CD8-positive, alpha-beta T cell (primary cell): ENCODE measurements at regions of chr15 and their contacts with region 1.

Region 1: DNA sequence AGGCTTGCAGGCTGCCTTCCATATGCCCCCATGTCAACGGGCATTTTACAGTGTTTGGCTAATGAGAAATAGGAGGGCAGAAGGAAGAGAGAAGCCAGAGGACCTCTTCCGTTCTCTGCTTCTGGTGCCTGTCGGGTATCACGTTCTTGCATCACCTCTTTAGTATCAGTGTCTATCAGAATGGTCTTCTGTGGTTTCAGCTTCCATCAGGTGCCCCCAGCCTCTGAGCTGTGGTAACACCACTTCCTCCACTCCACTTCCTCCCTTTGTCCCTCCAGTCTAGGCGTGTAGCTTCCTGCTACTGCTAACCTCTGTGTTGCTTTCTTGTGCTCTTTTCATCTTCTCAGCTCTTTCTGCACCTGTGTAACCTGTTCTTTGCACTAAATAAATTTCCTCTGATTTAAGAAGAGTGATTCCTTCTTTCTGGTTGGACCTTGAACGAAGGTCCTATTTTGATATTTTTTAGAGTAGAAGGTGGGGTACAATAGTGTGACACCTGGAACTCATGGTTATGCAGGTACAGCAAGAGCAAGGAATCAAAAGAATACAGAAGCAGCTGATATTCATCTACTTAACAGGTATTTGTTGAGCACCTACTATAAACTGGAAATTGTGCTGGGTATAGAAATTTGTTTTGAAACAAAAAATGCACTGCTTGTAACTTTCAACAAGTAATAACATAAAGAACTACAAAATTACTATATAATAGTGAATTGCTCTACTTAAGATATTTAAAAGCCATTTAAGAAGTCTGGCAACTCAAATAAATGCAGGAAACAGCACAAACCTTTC is 27.4 kb upstream of the FOXB1 start:
- DNase-seq: peak in 8 of 9 experiments; percentile 41 to 86 (median 64)
- ATAC-seq: peak; percentile 93
- H3K4me3 ChIP-seq: no peak overlapping the region
- H3K4me3 Mint-ChIP-seq: peak overlapping the region; percentile 40
- H3K27ac ChIP-seq: no peak overlapping the region
- H3K27ac Mint-ChIP-seq: peak overlapping the region; percentile 67
- H3K4me1 ChIP-seq: peaks cover 25% of the 10 kb centered on the region
- H3K4me1 Mint-ChIP-seq: peaks cover 30% of the 10 kb centered on the region
- H3K27me3 ChIP-seq: no peaks in the 10 kb centered on the region
- H3K27me3 Mint-ChIP-seq: peaks cover 2% of the 10 kb centered on the region
- CTCF ChIP-seq: no peak

Region 2: GRCh38 chr15:59933607-59934006 is 43.1 kb before region 1 on chr15:
- CTCF ChIA-PET with region 1: no interaction called
- POLR2A ChIA-PET with region 1: no interaction called
- intact Hi-C with region 1: loop called in 1 of 2 experiments (anchors 5 kb)
- DNase-seq: no peak
- ATAC-seq: no peak
- H3K4me3 ChIP-seq: no peak overlapping the region
- H3K4me3 Mint-ChIP-seq: no peak overlapping the region
- H3K27ac ChIP-seq: no peak overlapping the region
- H3K27ac Mint-ChIP-seq: no peak overlapping the region
- H3K4me1 ChIP-seq: no peaks in the 10 kb centered on the region
- H3K4me1 Mint-ChIP-seq: no peaks in the 10 kb centered on the region
- H3K27me3 ChIP-seq: no peaks in the 10 kb centered on the region
- H3K27me3 Mint-ChIP-seq: peaks cover 18% of the 10 kb centered on the region
- CTCF ChIP-seq: no peak

Region 3: GRCh38 chr15:61946778-61947177 is 1970.1 kb after region 1 on chr15:
- CTCF ChIA-PET with region 1: no interaction called
- POLR2A ChIA-PET with region 1: no interaction called
- intact Hi-C with region 1: no loop called
- DNase-seq: no peak
- ATAC-seq: no peak
- H3K4me3 ChIP-seq: no peak overlapping the region
- H3K4me3 Mint-ChIP-seq: no peak overlapping the region
- H3K27ac ChIP-seq: no peak overlapping the region
- H3K27ac Mint-ChIP-seq: no peak overlapping the region
- H3K4me1 ChIP-seq: no peaks in the 10 kb centered on the region
- H3K4me1 Mint-ChIP-seq: no peaks in the 10 kb centered on the region
- H3K27me3 ChIP-seq: no peaks in the 10 kb centered on the region
- H3K27me3 Mint-ChIP-seq: no peaks in the 10 kb centered on the region
- CTCF ChIP-seq: no peak